Activated CD4-positive, alpha-beta T cell treated with anti-CD3 and anti-CD28 coated beads for 36 hours (primary cell): ENCODE measurements at regions of chr9 and their contacts with region 1.

Region 1: GRCh38 chr9:109092051-109092580 is 27.6 kb downstream of the TMEM245 start:
- DNase-seq: no peak
- ATAC-seq: peak; percentile 91
- H3K4me3 Mint-ChIP-seq: no peak overlapping the region
- H3K27ac Mint-ChIP-seq: peak overlapping the region; percentile 74
- H3K4me1 Mint-ChIP-seq: peaks cover 57% of the 10 kb centered on the region
- H3K27me3 Mint-ChIP-seq: no peaks in the 10 kb centered on the region

Region 2: GRCh38 chr9:108913391-108913790 is 178.7 kb before region 1 on chr9:
- CTCF ChIA-PET with region 1: no interaction called
- POLR2A ChIA-PET with region 1: no interaction called
- intact Hi-C with region 1: no loop called
- DNase-seq: no peak
- ATAC-seq: no peak
- H3K4me3 Mint-ChIP-seq: no peak overlapping the region
- H3K27ac Mint-ChIP-seq: no peak overlapping the region
- H3K4me1 Mint-ChIP-seq: peaks cover 10% of the 10 kb centered on the region
- H3K27me3 Mint-ChIP-seq: no peaks in the 10 kb centered on the region

Region 3: DNA sequence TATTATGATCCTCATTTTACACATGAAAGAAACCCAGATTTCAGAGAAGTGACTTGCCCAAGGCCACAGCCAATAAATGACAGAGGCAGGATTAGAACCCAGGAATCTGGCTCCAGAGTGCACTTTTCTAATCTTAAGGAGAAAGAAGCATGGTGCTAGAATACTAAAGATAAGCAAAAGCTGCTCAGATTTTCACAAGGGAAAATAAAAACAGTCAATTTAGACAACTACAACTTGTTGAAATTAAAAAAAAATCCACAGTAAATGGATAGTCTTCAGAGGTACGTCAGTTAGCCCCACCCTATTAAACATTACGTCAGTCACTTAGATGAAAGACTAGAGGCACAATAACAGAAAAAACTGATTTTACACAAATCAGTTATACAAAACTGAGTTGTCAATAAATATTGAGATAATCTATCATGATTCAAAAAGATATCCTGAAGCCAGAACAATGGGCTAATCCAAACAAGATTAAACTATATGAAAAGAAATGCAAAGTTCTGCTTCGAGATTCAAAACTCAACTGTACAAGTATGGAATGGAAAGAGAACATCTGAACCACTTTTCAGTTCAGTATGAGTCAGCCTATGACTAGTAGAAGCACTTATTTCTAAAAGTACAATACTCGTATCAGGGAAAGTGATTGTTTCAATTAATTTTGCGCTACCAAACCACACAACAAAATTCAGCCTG is 18.4 kb after region 1 on chr9:
- CTCF ChIA-PET with region 1: interaction called, 6 read pairs
- POLR2A ChIA-PET with region 1: interaction called, 4 read pairs
- intact Hi-C with region 1: loop called in 1 of 2 experiments (anchors 1 kb)
- DNase-seq: no peak
- ATAC-seq: peak; percentile 64
- H3K4me3 Mint-ChIP-seq: peak overlapping the region; percentile 47
- H3K27ac Mint-ChIP-seq: peak overlapping the region; percentile 82
- H3K4me1 Mint-ChIP-seq: peaks cover 89% of the 10 kb centered on the region
- H3K27me3 Mint-ChIP-seq: no peaks in the 10 kb centered on the region

Region 4: GRCh38 chr9:109411798-109412352 is 319.8 kb after region 1 on chr9:
- CTCF ChIA-PET with region 1: no interaction called
- POLR2A ChIA-PET with region 1: no interaction called
- intact Hi-C with region 1: loop called in 1 of 2 experiments (anchors 5 kb)
- DNase-seq: peak; percentile 66
- ATAC-seq: peak; percentile 57
- H3K4me3 Mint-ChIP-seq: no peak overlapping the region
- H3K27ac Mint-ChIP-seq: peak overlapping the region; percentile 67
- H3K4me1 Mint-ChIP-seq: peaks cover 42% of the 10 kb centered on the region
- H3K27me3 Mint-ChIP-seq: peaks cover 17% of the 10 kb centered on the region